ENCODE measurements at regions of chr5 and their contacts with region 1.

Region 1: DNA sequence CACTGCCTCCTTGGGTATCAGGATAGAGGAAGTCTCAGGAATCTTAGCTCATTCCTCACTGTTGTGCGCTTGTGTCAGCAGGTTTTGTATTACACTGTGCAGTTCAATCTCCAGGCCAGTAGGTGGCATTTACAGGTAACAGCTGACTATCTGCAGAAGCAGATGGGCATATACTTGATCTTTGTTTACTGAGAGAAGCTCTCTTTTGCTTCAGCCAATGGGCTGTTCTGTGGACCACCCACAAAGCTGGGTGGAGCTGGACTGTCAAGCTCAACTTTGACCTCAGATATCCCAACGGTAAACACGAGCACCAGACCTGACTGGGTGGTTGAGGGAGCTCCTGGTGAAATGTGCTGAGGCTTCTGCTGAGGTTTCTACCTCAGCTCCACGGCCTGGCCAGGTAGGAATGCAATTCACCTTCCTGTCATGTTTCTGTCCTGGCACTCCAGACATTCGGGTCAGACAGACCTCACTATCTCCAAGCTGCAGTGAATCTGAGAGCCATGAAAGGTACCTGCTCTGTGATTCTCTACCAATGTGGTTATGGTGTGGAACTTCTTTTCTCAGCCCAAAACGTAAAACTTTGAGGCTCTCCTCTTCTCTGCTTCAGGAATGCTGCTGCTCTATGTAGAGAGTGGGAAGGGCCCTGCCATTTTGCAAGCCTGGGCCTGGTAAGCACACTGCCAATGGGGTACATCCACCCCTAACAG is 167.9 kb upstream of the ACTBL2 start:
- DNase-seq: peak; percentile 93
- ATAC-seq: peak; percentile 99
- H3K4me3 ChIP-seq: peak overlapping the region; percentile 30 to 51 (median 31); a peak in 4 of 6 replicates
- H3K27ac ChIP-seq: peak overlapping the region; percentile 57
- H3K4me1 ChIP-seq: peaks cover 25% of the 10 kb centered on the region
- H3K27me3 ChIP-seq: no peaks in the 10 kb centered on the region
- CTCF ChIP-seq: peak; percentile 94
- EP300 ChIP-seq: peak in 1 of 2 experiments; percentile 52; a peak in 1 of 4 replicates
- POLR2A ChIP-seq: peak in 1 of 2 experiments; percentile 65; a peak in 2 of 4 replicates
- RAD21 ChIP-seq: peak; percentile 89

Region 2: DNA sequence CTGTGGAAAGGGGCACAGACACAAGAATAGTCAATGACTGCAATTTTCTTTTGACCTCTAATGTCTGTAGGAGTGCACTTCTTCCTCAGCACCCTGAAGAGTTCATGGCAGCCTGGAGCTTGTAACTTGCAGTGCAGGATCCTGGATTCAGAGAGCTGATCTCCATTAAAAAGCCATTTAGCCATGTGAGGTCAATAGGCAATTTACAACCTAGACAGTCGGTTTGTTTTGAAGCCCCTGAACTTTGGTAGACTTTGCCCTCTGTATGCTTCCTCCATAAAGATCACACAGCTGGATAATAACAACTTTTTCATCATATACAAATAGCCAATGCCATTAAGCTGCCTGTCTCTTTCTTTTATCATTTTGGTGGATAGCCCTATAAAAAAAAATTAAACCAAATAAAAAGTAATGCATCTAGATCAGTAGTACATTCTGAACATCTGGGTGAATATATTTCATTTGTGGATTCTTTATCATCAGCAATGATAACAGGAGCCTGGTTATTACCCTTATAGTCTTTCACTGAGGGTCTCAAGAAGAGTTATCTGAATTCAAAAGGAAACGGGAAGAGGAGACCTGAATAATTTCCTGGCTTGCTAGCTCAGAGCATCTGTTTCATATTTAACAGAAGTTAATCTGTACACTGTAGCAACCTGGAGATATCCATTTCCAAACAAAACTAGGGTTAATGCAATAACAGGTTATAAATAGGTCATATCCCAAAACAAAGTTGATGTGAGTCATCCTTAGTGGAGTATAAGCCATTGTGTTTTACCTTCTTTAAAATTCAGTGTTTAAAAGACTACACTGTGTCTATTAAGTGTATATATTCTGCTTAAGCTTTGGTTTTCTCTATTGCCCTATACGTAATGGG is 25.9 kb after region 1 on chr5:
- CTCF ChIA-PET with region 1: no interaction called
- POLR2A ChIA-PET with region 1: interaction called, 11 read pairs
- in situ Hi-C with region 1: no loop called
- intact Hi-C with region 1: no loop called
- DNase-seq: peak; percentile 55
- ATAC-seq: peak; percentile 56; the same call in 2 of the 3 replicates
- H3K4me3 ChIP-seq: no peak overlapping the region
- H3K27ac ChIP-seq: no peak overlapping the region
- H3K4me1 ChIP-seq: peaks cover 20% of the 10 kb centered on the region
- H3K27me3 ChIP-seq: no peaks in the 10 kb centered on the region
- CTCF ChIP-seq: no peak
- EP300 ChIP-seq: no peak
- POLR2A ChIP-seq: no peak
- RAD21 ChIP-seq: no peak

Region 3: GRCh38 chr5:57692582-57693487 is 42.3 kb after region 1 on chr5:
- CTCF ChIA-PET with region 1: no interaction called
- POLR2A ChIA-PET with region 1: interaction called, 20 read pairs
- in situ Hi-C with region 1: no loop called
- intact Hi-C with region 1: loop called (anchors 2 kb)
- DNase-seq: peak; percentile 92
- ATAC-seq: peak; percentile 95
- H3K4me3 ChIP-seq: no peak overlapping the region; a peak in 1 of 6 replicates
- H3K27ac ChIP-seq: peak overlapping the region; percentile 85
- H3K4me1 ChIP-seq: peaks cover 49% of the 10 kb centered on the region
- H3K27me3 ChIP-seq: no peaks in the 10 kb centered on the region
- CTCF ChIP-seq: no peak
- EP300 ChIP-seq: peak; percentile 38 to 82; a peak in 2 of 4 replicates
- POLR2A ChIP-seq: no peak
- RAD21 ChIP-seq: no peak

Region 4: DNA sequence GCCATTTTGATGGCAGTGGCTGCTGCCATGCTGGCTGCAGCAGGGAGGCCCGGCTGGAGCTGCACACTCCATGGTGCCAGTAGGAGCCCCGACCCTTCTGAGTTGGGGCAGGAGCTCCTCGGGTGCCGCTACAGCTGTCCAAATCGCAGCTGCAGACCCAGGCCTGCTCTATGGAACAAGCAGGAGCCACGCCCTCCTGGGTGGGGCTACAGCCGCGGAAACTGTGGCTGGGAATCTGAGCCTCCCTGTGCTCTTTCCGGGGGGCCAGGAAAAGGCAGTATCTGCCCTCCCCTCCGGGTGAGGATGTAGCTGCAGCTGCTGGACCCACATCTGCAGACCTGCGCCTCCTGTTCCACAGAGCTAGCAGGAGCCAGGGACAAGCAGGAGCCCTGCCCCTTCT is 111.0 kb after region 1 on chr5:
- CTCF ChIA-PET with region 1: no interaction called
- POLR2A ChIA-PET with region 1: no interaction called
- in situ Hi-C with region 1: no loop called
- intact Hi-C with region 1: loop called (anchors 5 kb)
- DNase-seq: no peak
- ATAC-seq: no peak
- H3K4me3 ChIP-seq: no peak overlapping the region
- H3K27ac ChIP-seq: no peak overlapping the region
- H3K4me1 ChIP-seq: no peaks in the 10 kb centered on the region
- H3K27me3 ChIP-seq: 0 out of 5 replicates have a peak, but pooled peaks cover 0 to 4% of the 10 kb centered on the region in 2 experiments
- CTCF ChIP-seq: no peak
- EP300 ChIP-seq: no peak
- POLR2A ChIP-seq: no peak
- RAD21 ChIP-seq: no peak

Region 5: GRCh38 chr5:58460732-58461286 is 810.3 kb after region 1 on chr5:
- CTCF ChIA-PET with region 1: interaction called, 8 read pairs
- POLR2A ChIA-PET with region 1: interaction called, 22 read pairs
- in situ Hi-C with region 1: loop called (anchors 10 kb)
- intact Hi-C with region 1: loop called (anchors 1 kb)
- DNase-seq: peak; percentile 64
- ATAC-seq: peak; percentile 75
- H3K4me3 ChIP-seq: peak overlapping the region; percentile 32 to 79 (median 71); a peak in 4 of 6 replicates
- H3K27ac ChIP-seq: peak overlapping the region; percentile 73
- H3K4me1 ChIP-seq: peaks cover 41% of the 10 kb centered on the region
- H3K27me3 ChIP-seq: no peaks in the 10 kb centered on the region; a peak in 1 of 5 replicates
- CTCF ChIP-seq: peak; percentile 89
- EP300 ChIP-seq: no peak
- POLR2A ChIP-seq: no peak
- RAD21 ChIP-seq: peak; percentile 69